Naive thymus-derived CD4-positive, alpha-beta T cell (primary cell): ENCODE measurements at regions of chr11 and their contacts with region 1.

Region 1: DNA sequence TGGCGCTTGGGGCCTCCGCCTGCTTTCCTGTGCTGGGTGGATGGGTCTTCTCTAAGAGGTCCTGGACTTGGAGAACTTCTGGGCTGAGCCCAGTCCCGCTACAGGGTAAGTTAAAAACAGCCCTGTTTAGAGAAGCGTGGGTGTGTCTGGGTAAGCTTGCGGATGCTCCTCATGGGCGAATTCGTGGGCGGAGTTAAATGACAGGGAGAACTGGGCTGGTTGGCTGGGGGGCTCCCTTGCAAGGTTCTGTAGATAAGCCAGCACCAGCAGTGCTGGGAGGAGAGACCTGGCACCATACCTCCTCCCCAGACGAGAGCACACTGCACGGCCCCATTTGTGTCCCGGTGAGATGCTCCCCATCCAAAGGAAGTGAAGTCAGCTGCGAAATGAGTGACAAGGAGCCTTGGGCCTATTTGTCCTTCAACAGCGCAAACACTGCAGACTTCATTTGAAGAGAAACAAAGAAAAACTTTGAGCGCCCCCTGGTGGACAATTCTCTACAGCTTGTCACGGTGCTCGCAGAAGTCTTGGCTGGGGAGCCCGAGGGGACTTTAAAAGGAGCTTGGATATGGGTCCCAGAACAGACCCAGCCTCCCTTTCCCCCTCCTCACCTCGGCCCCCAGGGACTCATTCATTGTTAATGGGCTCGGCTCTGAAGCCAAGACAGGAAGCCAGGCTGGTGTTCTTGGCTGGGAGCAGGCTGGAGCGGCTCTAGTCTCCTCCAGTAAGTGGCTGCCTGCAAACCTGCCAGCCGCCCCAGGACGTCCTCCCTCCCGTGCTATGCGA is 39.5 kb downstream of the TP53I11 start:
- DNase-seq: peak; percentile 57 to 84 (median 78)
- ATAC-seq: peak; percentile 78
- H3K4me3 ChIP-seq: no peak overlapping the region
- H3K4me3 Mint-ChIP-seq: no peak overlapping the region
- H3K27ac ChIP-seq: no peak overlapping the region
- H3K27ac Mint-ChIP-seq: peak overlapping the region in 4 of 9 donors; percentile 14 to 55 (median 30)
- H3K4me1 ChIP-seq: no peaks in the 10 kb centered on the region
- H3K4me1 Mint-ChIP-seq: peaks cover 4 to 9% (median 7%) of the 10 kb centered on the region in 7 donors
- H3K27me3 ChIP-seq: no peaks in the 10 kb centered on the region
- H3K27me3 Mint-ChIP-seq: no peaks in the 10 kb centered on the region

Region 2: DNA sequence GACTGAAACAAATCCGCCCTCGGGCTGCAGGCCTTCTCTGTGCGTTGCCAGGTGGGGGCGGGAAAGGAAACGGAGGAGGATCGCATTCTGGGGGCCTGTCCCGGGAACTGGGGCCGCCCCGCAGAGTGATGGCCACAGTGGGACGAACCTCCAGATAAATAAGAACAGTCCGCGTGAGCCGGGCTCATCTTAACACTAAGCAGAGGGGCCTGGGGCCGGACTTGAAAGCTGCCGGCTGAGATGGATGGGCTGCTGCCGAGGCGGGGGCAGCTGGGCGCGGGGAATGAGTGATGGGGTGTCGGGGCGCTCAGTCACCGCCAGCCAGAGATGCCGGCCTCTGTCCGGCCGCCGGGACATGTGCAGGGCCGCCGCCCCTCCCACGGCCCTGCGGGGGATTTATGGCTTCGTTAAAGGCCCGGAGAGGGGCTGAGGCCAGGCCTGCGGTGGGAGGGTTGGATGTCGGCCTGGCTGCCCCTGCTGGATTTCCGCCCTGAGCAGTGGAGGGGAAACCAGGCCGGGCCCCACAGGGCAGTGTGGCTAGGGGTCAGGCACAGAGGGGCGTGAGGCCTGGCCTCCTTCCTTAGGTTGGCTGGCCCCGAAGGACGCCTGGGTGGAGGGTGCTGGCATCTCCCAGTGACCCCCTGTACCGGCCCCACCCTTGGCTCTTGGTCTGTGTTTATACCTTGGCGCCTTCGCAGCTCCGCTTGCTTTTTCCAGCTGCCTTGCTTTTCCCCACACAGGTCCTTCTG is 391.1 kb before region 1 on chr11:
- CTCF ChIA-PET with region 1: interaction called, 4 read pairs
- POLR2A ChIA-PET with region 1: no interaction called
- intact Hi-C with region 1: loop called in 1 of 2 experiments (anchors 1 kb)
- DNase-seq: no peak
- ATAC-seq: no peak
- H3K4me3 ChIP-seq: no peak overlapping the region
- H3K4me3 Mint-ChIP-seq: no peak overlapping the region
- H3K27ac ChIP-seq: no peak overlapping the region
- H3K27ac Mint-ChIP-seq: no peak overlapping the region
- H3K4me1 ChIP-seq: no peaks in the 10 kb centered on the region
- H3K4me1 Mint-ChIP-seq: peaks cover 0 to 4% (median 3%) of the 10 kb centered on the region in 7 donors
- H3K27me3 ChIP-seq: no peaks in the 10 kb centered on the region
- H3K27me3 Mint-ChIP-seq: peaks cover 14 to 41% (median 22%) of the 10 kb centered on the region in 5 donors

Region 3: DNA sequence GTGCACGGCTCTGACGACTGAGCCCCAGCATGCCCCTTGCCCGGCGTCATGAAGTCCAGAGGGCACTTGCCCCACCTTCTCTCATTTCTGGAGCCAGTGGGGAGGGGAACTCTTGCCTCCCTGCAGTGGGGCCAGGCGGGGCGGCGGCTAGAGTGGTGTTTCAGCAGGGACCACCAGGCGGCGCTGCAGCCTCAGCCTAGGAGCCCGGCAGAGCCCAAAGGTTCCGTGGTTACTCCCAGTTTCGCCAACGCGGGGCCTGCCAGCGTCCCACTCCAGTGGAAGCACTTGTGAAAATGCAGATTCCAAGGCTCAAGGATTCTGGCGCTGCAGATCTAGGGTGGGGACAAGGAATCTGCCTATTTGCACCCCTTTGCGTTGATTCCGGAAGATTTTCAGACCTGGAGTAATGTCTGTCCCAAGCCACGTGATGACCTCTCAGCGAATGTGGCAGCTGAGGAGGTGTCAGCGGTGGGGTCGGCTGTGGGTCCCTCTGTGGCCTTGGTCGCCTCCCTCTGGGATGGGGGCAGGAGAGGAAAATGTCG is 290.0 kb before region 1 on chr11:
- CTCF ChIA-PET with region 1: interaction called, 13 read pairs
- POLR2A ChIA-PET with region 1: no interaction called
- intact Hi-C with region 1: loop called (anchors 1 kb)
- DNase-seq: peak; percentile 33 to 64 (median 55)
- ATAC-seq: peak; percentile 76
- H3K4me3 ChIP-seq: no peak overlapping the region
- H3K4me3 Mint-ChIP-seq: no peak overlapping the region
- H3K27ac ChIP-seq: no peak overlapping the region
- H3K27ac Mint-ChIP-seq: peak overlapping the region in 1 of 9 donors; percentile 12
- H3K4me1 ChIP-seq: peaks cover 0 to 20% of the 10 kb centered on the region in 2 donors
- H3K4me1 Mint-ChIP-seq: peaks cover 20 to 44% (median 30%) of the 10 kb centered on the region in 7 donors
- H3K27me3 ChIP-seq: no peaks in the 10 kb centered on the region
- H3K27me3 Mint-ChIP-seq: no peaks in the 10 kb centered on the region

Region 4: GRCh38 chr11:44775366-44775984 is 135.7 kb before region 1 on chr11:
- CTCF ChIA-PET with region 1: no interaction called
- POLR2A ChIA-PET with region 1: no interaction called
- intact Hi-C with region 1: loop called in 1 of 2 experiments (anchors 2 kb)
- DNase-seq: peak; percentile 34 to 68 (median 49)
- ATAC-seq: peak; percentile 78
- H3K4me3 ChIP-seq: no peak overlapping the region
- H3K4me3 Mint-ChIP-seq: peak overlapping the region in 1 of 10 donors; percentile 35
- H3K27ac ChIP-seq: no peak overlapping the region
- H3K27ac Mint-ChIP-seq: peak overlapping the region in 4 of 9 donors; percentile 13 to 72 (median 34)
- H3K4me1 ChIP-seq: peaks cover 0 to 8% of the 10 kb centered on the region in 2 donors
- H3K4me1 Mint-ChIP-seq: peaks cover 5 to 46% (median 32%) of the 10 kb centered on the region in 7 donors
- H3K27me3 ChIP-seq: no peaks in the 10 kb centered on the region
- H3K27me3 Mint-ChIP-seq: no peaks in the 10 kb centered on the region